ENCODE measurements at regions of chr9 and their contacts with region 1.

Region 1: GRCh38 chr9:100598641-100599145 is 20.8 kb downstream of the CAVIN4 start:
- DNase-seq: peak; percentile 73
- H3K4me3 Mint-ChIP-seq: peak overlapping the region; percentile 69
- H3K27ac Mint-ChIP-seq: no peak overlapping the region
- H3K4me1 Mint-ChIP-seq: peaks cover 16% of the 10 kb centered on the region
- H3K27me3 Mint-ChIP-seq: peaks cover 14% of the 10 kb centered on the region
- CTCF ChIP-seq: no peak

Region 2: GRCh38 chr9:100322954-100323536 is 275.6 kb before region 1 on chr9:
- CTCF ChIA-PET with region 1: interaction called, 25 read pairs
- POLR2A ChIA-PET with region 1: no interaction called
- intact Hi-C with region 1: loop called (anchors 5 kb)
- DNase-seq: peak; percentile 46
- H3K4me3 Mint-ChIP-seq: no peak overlapping the region
- H3K27ac Mint-ChIP-seq: no peak overlapping the region
- H3K4me1 Mint-ChIP-seq: peaks cover 3% of the 10 kb centered on the region
- H3K27me3 Mint-ChIP-seq: no peaks in the 10 kb centered on the region
- CTCF ChIP-seq: peak; percentile 27

Region 3: GRCh38 chr9:100561256-100561655 is 37.4 kb before region 1 on chr9:
- CTCF ChIA-PET with region 1: interaction called, 13 read pairs
- POLR2A ChIA-PET with region 1: no interaction called
- intact Hi-C with region 1: no loop called
- DNase-seq: no peak
- H3K4me3 Mint-ChIP-seq: no peak overlapping the region
- H3K27ac Mint-ChIP-seq: no peak overlapping the region
- H3K4me1 Mint-ChIP-seq: peaks cover 7% of the 10 kb centered on the region
- H3K27me3 Mint-ChIP-seq: no peaks in the 10 kb centered on the region
- CTCF ChIP-seq: no peak

Region 4: GRCh38 chr9:100639854-100640253 is 41.2 kb after region 1 on chr9:
- CTCF ChIA-PET with region 1: interaction called, 16 read pairs
- POLR2A ChIA-PET with region 1: interaction called, 3 read pairs
- intact Hi-C with region 1: no loop called
- DNase-seq: no peak
- H3K4me3 Mint-ChIP-seq: no peak overlapping the region
- H3K27ac Mint-ChIP-seq: no peak overlapping the region
- H3K4me1 Mint-ChIP-seq: no peaks in the 10 kb centered on the region
- H3K27me3 Mint-ChIP-seq: peaks cover 21% of the 10 kb centered on the region
- CTCF ChIP-seq: no peak

Region 5: DNA sequence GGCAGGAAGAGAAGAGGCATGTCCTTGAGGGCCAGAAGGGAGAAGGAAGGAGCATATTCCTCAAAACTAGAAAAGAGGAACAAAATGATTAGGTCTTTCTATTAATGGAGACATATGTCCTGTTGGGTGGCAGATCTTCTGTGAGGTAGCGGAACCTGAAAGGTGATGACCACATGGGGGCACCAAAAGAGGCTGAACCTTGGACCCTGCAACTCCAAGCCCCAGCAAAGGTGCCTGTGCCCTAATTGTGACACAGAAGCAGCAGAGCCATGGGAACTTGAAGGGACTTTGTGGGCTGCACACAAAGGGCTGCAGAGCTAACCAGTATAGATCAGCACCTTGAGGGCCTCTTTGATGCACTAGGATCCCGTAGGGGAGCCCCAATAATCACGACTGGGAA is 628.1 kb after region 1 on chr9:
- CTCF ChIA-PET with region 1: interaction called, 10 read pairs
- POLR2A ChIA-PET with region 1: no interaction called
- intact Hi-C with region 1: no loop called
- DNase-seq: no peak
- H3K4me3 Mint-ChIP-seq: no peak overlapping the region
- H3K27ac Mint-ChIP-seq: no peak overlapping the region
- H3K4me1 Mint-ChIP-seq: no peaks in the 10 kb centered on the region
- H3K27me3 Mint-ChIP-seq: peaks cover 29% of the 10 kb centered on the region
- CTCF ChIP-seq: no peak